IMR-90 (cell line): ENCODE measurements at regions of chr7 and their contacts with region 1.

Region 1: GRCh38 chr7:105493923-105494315 is 28.2 kb downstream of the PUS7 start:
- DNase-seq: peak; percentile 98
- ATAC-seq: peak; percentile 95
- H3K4me3 ChIP-seq: peak overlapping the region; percentile 36; the same call in 1 of the 2 replicates
- H3K27ac ChIP-seq: peak overlapping the region; percentile 87
- H3K4me1 ChIP-seq: peaks cover 19% of the 10 kb centered on the region
- H3K27me3 ChIP-seq: no peaks in the 10 kb centered on the region
- CTCF ChIP-seq: no peak
- POLR2A ChIP-seq: no peak
- RAD21 ChIP-seq: no peak

Region 2: DNA sequence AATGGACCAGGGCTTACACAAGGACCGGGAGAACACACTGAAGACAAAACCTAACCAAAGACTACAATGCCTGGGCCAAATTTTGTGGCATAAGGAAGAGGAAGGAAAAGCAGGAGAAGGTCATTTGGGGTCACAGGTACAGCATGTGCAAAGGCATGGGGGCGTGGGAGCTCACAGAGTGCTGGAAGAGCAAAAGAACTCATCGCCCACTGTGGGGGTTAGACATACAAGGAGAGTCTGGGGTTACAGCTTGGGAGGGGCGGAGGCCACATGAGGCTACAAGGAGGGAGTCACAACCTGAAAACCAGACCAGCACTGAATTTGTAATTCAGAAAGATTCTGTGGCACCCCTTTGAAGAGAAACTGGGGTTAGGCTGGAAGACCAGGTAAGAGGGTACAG is 18.5 kb after region 1 on chr7:
- CTCF ChIA-PET with region 1: no interaction called
- POLR2A ChIA-PET with region 1: interaction called, 14 read pairs
- dilution Hi-C with region 1: no loop called
- in situ Hi-C with region 1: no loop called
- intact Hi-C with region 1: no loop called
- DNase-seq: no peak
- ATAC-seq: no peak
- H3K4me3 ChIP-seq: no peak overlapping the region
- H3K27ac ChIP-seq: no peak overlapping the region
- H3K4me1 ChIP-seq: 0 out of 2 replicates have a peak, but pooled peaks cover 2% of the 10 kb centered on the region
- H3K27me3 ChIP-seq: no peaks in the 10 kb centered on the region
- CTCF ChIP-seq: no peak
- POLR2A ChIP-seq: no peak
- RAD21 ChIP-seq: no peak